Endothelial cell of umbilical vein (primary cell): ENCODE measurements at regions of chr5 and their contacts with region 1.

Region 1: GRCh38 chr5:93620487-93621326 is 37.7 kb downstream of the NR2F1 start:
- DNase-seq: peak; percentile 69
- H3K4me3 ChIP-seq: peak overlapping the region; percentile 51 to 67 (median 64)
- H3K27ac ChIP-seq: peak overlapping the region; percentile 39
- H3K4me1 ChIP-seq: peaks cover 7% of the 10 kb centered on the region
- H3K27me3 ChIP-seq: peaks cover 0 to 2% of the 10 kb centered on the region in 2 experiments
- CTCF ChIP-seq: peak in 1 of 2 donors; percentile 28
- POLR2A ChIP-seq: no peak

Region 2: GRCh38 chr5:93607367-93608258 is 13.1 kb before region 1 on chr5:
- CTCF ChIA-PET with region 1: interaction called, 10 read pairs
- POLR2A ChIA-PET with region 1: interaction called, 3 read pairs
- dilution Hi-C with region 1: no loop called
- intact Hi-C with region 1: loop called (anchors 1 kb)
- DNase-seq: peak; percentile 74
- H3K4me3 ChIP-seq: no peak overlapping the region
- H3K27ac ChIP-seq: no peak overlapping the region
- H3K4me1 ChIP-seq: peaks cover 6% of the 10 kb centered on the region
- H3K27me3 ChIP-seq: peaks cover 71 to 98% of the 10 kb centered on the region in 2 experiments
- CTCF ChIP-seq: peak; percentile 28 to 59
- POLR2A ChIP-seq: no peak

Region 3: GRCh38 chr5:93717162-93717561 is 96.5 kb after region 1 on chr5:
- CTCF ChIA-PET with region 1: no interaction called
- POLR2A ChIA-PET with region 1: no interaction called
- dilution Hi-C with region 1: no loop called
- intact Hi-C with region 1: loop called (anchors 5 kb)
- DNase-seq: peak; percentile 67
- H3K4me3 ChIP-seq: no peak overlapping the region
- H3K27ac ChIP-seq: no peak overlapping the region
- H3K4me1 ChIP-seq: no peaks in the 10 kb centered on the region
- H3K27me3 ChIP-seq: no peaks in the 10 kb centered on the region
- CTCF ChIP-seq: no peak
- POLR2A ChIP-seq: no peak

Region 4: DNA sequence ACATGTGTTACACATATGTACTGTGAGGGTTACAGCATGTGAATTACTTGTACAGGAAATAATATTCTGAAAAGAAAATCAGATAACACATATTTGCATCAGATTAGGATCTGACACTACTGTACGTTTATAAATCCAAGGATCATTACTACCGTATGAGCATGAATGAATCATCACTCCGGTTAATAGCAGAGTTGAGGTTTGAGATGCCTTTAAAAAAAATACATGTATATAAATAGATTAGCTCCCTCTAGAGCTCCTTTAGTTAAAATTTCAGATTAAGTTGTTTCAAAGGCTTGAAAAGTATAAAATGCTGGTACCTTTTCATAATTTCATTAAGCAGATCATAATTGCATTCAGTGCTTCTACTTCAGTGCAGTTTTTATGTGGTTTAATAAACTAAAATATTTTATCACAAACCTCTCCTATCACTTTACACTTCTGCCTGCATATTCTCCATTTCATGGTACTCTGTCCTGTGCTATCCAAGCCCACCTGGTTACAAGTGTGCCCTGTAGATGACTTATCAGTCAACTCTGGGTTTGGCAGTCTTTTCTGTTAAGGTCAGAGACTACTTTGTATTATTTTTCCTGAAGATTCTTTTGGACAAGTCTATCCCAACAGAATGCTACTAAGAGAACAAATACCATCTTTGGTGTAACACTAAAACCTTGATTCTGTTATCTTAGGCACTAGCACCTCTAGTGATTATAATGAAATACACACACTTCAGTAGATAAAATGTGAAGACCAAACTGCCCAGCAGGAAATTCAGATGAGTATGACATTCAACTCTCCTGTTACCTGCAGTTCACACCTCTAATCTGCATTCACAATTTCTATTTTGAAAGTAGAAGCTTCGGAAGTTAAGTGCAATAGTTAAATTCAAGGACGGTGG is 168.7 kb after region 1 on chr5:
- CTCF ChIA-PET with region 1: interaction called, 4 read pairs
- POLR2A ChIA-PET with region 1: no interaction called
- dilution Hi-C with region 1: no loop called
- intact Hi-C with region 1: loop called (anchors 1 kb)
- DNase-seq: peak; percentile 56
- H3K4me3 ChIP-seq: no peak overlapping the region
- H3K27ac ChIP-seq: no peak overlapping the region
- H3K4me1 ChIP-seq: peaks cover 10% of the 10 kb centered on the region
- H3K27me3 ChIP-seq: no peaks in the 10 kb centered on the region
- CTCF ChIP-seq: no peak
- POLR2A ChIP-seq: no peak